CD8-positive, alpha-beta memory T cell (primary cell): ENCODE measurements at regions of chr1 and their contacts with region 1.

Region 1: DNA sequence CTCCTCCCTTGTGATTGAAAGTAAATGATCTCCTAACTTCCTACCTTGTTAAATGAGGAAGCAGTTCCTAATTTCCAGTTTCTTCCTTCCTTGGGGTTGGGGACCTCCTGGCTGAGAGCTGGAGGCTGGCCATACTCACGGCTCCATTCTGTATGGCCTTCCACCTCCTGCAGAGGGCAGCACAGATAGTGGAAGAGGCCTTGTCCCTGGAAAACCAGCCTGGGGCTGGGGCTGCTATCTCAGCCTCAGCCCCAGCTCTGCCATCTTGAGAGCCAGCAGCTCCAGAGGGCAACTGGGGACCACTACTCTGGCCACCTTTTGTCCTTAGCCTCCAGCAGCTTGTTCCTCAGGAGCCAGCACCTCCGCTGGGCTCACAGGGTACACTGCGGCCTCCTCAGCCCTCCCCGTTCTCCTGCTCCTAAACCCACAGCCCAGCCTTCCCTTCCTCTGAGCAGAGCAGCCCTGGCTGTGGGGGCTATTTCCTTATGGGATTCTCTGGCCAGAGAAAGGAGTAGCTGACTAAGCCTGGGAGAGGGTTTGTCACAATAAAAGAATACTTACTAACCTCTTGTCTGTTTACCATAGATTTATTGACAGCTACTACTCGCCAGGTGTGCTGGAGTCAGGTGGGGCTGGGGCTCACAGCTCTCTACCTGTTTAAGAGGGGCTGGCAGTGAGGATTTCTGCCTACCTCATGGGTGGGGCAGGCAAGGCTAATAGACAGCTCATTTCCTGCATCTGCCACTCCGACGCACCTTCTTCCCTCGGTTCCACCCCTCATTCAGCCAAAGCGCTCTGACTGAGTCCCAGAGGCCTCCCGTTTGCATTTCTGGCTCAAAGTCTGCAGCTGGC is 6.3 kb downstream of the TMEM234 start:
- DNase-seq: peak; percentile 32 to 66 (median 38)
- H3K4me3 ChIP-seq: no peak overlapping the region
- H3K4me3 Mint-ChIP-seq: peak overlapping the region in 1 of 7 donors; percentile 18
- H3K27ac ChIP-seq: no peak overlapping the region
- H3K27ac Mint-ChIP-seq: peak overlapping the region in 7 of 8 donors; percentile 12 to 72 (median 33)
- H3K4me1 ChIP-seq: peaks cover 14% of the 10 kb centered on the region
- H3K4me1 Mint-ChIP-seq: peaks cover 6 to 20% (median 20%) of the 10 kb centered on the region in 3 donors
- H3K27me3 ChIP-seq: no peaks in the 10 kb centered on the region
- H3K27me3 Mint-ChIP-seq: no peaks in the 10 kb centered on the region

Region 2: DNA sequence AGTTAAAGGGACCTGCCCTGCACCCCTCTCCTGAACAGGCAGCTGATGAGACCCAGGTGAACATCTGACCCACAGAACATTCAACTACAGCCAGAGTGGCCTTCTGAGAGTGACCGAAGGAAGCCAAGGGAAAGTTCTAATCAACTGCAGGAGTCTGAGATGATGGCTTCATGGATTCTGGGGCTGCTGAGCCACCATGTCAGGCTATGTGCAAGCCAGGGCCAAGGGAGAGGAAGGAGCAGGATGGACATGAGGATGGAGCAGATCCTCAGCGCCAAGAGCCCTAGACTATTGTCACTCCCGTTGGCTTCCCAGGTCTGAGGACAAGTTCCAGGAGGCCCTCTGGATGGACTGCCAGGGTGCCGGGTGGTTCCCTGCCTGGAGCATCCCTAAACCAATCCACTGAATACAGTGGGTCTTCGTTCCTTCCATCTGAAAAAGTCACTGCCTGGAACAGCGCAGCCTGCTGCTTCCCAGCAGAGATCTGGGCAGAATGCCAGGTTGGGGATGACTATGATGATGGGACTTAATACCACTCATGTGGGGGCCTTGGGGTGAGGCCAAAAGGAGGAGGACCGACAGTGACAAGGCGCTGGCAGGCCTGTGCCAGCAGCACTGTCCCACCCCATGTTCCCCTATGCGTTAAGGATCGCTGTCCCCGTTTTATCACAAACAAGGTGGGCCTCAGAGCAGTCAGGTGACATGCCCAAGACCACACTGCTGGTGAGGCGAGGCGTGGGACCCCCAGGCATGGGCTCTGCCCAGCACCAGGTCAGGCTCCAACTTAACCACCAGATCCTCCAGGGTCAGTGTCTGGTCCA is 419.8 kb before region 1 on chr1:
- CTCF ChIA-PET with region 1: no interaction called
- POLR2A ChIA-PET with region 1: no interaction called
- DNase-seq: peak in 1 of 5 donors; percentile 7
- H3K4me3 ChIP-seq: no peak overlapping the region
- H3K4me3 Mint-ChIP-seq: no peak overlapping the region
- H3K27ac ChIP-seq: no peak overlapping the region
- H3K27ac Mint-ChIP-seq: peak overlapping the region in 1 of 8 donors; percentile 47
- H3K4me1 ChIP-seq: no peaks in the 10 kb centered on the region
- H3K4me1 Mint-ChIP-seq: no peaks in the 10 kb centered on the region
- H3K27me3 ChIP-seq: peaks cover 5% of the 10 kb centered on the region
- H3K27me3 Mint-ChIP-seq: peaks cover 2 to 15% of the 10 kb centered on the region in 2 donors

Region 3: DNA sequence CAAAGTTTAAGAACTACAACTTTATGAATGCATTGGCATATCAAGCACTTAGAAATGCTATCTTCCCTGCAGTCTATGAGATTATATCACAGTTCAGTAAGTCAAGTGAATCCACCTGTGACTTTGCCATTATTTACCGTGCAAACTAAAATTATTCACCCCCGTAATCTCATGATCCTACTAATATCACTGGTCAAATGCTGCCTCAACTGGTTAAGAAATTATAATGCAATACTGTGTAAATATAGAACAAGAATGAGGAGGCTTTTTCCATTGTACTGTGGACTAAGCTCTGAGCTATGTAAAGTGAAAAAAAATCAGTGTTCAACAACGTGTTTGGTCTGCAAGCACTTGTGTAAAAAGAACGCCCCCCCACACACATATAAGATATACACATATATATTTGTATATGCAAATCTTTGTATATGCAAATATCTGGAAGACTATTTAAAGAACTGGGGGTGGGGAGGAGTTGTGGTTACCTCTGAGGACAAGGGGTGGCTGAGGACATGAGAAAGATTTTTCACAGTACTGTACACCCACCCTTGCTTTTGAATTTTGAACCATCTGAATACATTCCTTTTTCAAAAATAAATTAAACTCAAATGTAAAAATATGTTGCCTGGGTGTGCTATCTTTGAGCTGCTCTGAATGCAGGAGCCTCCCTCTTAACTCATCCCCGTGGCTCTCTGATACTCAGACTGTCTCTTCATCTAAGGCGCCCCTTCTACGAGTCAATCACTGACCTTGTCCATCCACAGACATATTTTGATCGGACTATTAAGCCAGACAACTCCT is 334.8 kb before region 1 on chr1:
- CTCF ChIA-PET with region 1: no interaction called
- POLR2A ChIA-PET with region 1: no interaction called
- DNase-seq: no peak
- H3K4me3 ChIP-seq: no peak overlapping the region
- H3K4me3 Mint-ChIP-seq: no peak overlapping the region
- H3K27ac ChIP-seq: no peak overlapping the region
- H3K27ac Mint-ChIP-seq: no peak overlapping the region
- H3K4me1 ChIP-seq: peaks cover 6% of the 10 kb centered on the region
- H3K4me1 Mint-ChIP-seq: peaks cover 13 to 22% (median 14%) of the 10 kb centered on the region in 3 donors
- H3K27me3 ChIP-seq: no peaks in the 10 kb centered on the region
- H3K27me3 Mint-ChIP-seq: peaks cover 0 to 1% of the 10 kb centered on the region in 2 donors

Region 4: GRCh38 chr1:32179443-32180185 is 36.2 kb before region 1 on chr1 and contains the start of gene TXLNA:
- CTCF ChIA-PET with region 1: no interaction called
- POLR2A ChIA-PET with region 1: no interaction called
- DNase-seq: peak; percentile 83 to 91 (median 87)
- H3K4me3 ChIP-seq: peak within 1 kb of the TSS; percentile 74
- H3K4me3 Mint-ChIP-seq: peak within 1 kb of the TSS; percentile 86 to 99 (median 91)
- H3K27ac ChIP-seq: peak within 1 kb of the TSS; percentile 88
- H3K27ac Mint-ChIP-seq: peak within 1 kb of the TSS; percentile 91 to 98 (median 94)
- H3K4me1 ChIP-seq: peaks cover 28% of the 10 kb centered on the region
- H3K4me1 Mint-ChIP-seq: peaks cover 35 to 51% (median 45%) of the 10 kb centered on the region in 3 donors
- H3K27me3 ChIP-seq: no peaks in the 10 kb centered on the region
- H3K27me3 Mint-ChIP-seq: no peaks in the 10 kb centered on the region
- total RNA-seq, gene TXLNA: 99.0 to 99.9 TPM

Region 5: DNA sequence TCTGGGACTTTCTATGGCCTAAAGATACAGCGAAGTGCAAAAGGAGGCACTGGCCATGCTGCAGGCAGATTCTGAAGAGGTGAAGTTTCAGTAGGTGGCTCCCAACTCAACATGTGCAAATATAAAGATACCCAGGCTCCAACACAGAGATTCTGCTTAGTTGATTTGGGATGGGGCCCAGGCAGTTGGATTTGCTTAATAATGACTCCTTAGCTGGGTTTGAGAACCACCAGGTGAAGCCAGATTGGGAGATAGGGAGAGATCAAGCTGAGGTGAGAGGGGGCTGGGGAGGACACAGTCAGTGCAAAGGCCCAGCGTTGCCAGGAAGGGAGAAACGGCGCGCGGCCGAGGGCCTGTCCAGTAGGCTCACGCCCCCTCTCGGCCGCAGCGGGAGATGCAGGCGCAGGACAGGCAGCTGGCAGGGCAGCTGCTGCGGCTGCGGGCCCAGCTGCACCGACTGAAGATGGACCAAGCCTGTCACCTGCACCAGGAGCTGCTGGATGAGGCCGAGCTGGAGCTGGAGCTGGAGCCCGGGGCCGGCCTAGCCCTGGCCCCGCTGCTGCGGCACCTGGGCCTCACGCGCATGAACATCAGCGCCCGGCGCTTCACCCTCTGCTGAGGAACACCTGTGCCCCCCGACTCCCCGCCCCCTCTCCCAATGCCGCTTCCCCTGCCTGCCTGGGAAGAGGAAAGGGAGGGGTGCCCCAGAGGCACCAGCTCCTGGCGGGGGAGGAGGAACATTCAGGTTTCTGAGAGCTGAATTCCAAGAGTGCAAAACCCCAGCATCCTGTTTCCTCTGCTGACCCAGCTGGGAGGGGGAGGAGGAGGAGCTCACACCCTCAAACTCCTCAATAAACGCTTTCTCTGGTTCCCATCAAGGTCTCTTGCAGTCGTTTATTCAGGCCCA is 32.4 kb after region 1 on chr1:
- CTCF ChIA-PET with region 1: interaction called, 40 read pairs
- POLR2A ChIA-PET with region 1: interaction called, 3 read pairs
- DNase-seq: peak; percentile 65 to 84 (median 68)
- H3K4me3 ChIP-seq: peak overlapping the region; percentile 60
- H3K4me3 Mint-ChIP-seq: peak overlapping the region; percentile 62 to 99 (median 85)
- H3K27ac ChIP-seq: no peak overlapping the region
- H3K27ac Mint-ChIP-seq: peak overlapping the region; percentile 72 to 100 (median 98)
- H3K4me1 ChIP-seq: peaks cover 48% of the 10 kb centered on the region
- H3K4me1 Mint-ChIP-seq: peaks cover 36 to 48% (median 40%) of the 10 kb centered on the region in 3 donors
- H3K27me3 ChIP-seq: no peaks in the 10 kb centered on the region
- H3K27me3 Mint-ChIP-seq: peaks cover 0 to 4% of the 10 kb centered on the region in 2 donors

Region 6: DNA sequence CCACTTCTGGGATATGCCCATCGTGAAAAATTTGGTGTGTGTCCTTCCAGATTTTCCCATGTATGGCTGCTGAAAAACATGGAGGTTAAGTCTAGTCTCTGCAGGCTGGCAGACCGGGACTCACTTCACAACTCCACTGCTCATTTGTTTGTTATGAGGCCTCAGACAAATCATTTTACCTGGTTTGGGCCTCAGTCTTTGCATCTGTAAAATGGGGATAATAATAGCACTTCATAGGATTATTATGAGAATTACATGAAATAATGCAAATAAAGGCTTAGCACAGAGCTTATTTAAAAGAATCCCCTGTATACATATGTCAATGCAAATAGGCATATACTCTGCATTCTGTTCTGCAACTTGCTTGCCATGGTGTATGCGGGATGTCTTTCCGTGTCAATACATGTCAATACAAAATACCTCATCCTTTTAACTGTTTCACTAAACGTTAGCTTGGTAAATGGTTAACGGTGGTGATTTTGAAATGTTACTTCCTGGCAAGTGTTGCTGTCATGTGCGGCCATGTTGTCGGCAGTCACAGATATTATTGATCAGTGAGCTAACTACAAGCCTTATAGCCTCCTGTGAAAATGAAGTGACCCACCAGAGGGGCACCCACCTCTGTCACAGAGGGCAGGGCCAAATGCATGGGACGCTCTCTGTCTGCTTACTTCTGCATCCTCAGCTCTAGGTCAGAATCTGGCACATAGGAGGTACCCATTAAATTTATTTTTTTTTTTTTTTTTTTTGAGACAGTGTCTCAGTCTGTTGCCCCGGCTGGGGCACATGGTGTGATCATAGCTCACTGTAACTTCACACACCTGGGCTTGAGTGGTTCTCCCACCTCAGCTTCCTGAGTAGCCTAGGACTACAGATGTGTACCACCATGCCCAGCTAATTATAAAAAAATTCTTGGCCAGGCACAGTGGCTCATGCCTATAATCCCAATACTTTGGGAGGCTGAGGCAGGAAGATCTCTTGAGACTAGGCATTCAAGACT is 39.5 kb after region 1 on chr1:
- CTCF ChIA-PET with region 1: interaction called, 40 read pairs
- POLR2A ChIA-PET with region 1: interaction called, 5 read pairs
- DNase-seq: peak in 1 of 5 donors; percentile 56
- H3K4me3 ChIP-seq: peak overlapping the region; percentile 60
- H3K4me3 Mint-ChIP-seq: peak overlapping the region; percentile 88 to 100 (median 96)
- H3K27ac ChIP-seq: no peak overlapping the region
- H3K27ac Mint-ChIP-seq: peak overlapping the region; percentile 76 to 100 (median 92)
- H3K4me1 ChIP-seq: peaks cover 47% of the 10 kb centered on the region
- H3K4me1 Mint-ChIP-seq: peaks cover 51 to 65% (median 56%) of the 10 kb centered on the region in 3 donors
- H3K27me3 ChIP-seq: no peaks in the 10 kb centered on the region
- H3K27me3 Mint-ChIP-seq: peaks cover 0 to 2% of the 10 kb centered on the region in 2 donors

Region 7: GRCh38 chr1:32291708-32292492 is 76.0 kb after region 1 on chr1 and contains the start of gene HDAC1:
- CTCF ChIA-PET with region 1: interaction called, 15 read pairs
- POLR2A ChIA-PET with region 1: interaction called, 4 read pairs
- DNase-seq: peak; percentile 95 to 98 (median 97)
- H3K4me3 ChIP-seq: peak within 1 kb of the TSS; percentile 76
- H3K4me3 Mint-ChIP-seq: peak within 1 kb of the TSS; percentile 96 to 100 (median 99)
- H3K27ac ChIP-seq: peak within 1 kb of the TSS; percentile 93
- H3K27ac Mint-ChIP-seq: peak within 1 kb of the TSS; percentile 95 to 99 (median 98)
- H3K4me1 ChIP-seq: peaks cover 59% of the 10 kb centered on the region
- H3K4me1 Mint-ChIP-seq: peaks cover 41 to 59% (median 55%) of the 10 kb centered on the region in 3 donors
- H3K27me3 ChIP-seq: no peaks in the 10 kb centered on the region
- H3K27me3 Mint-ChIP-seq: no peaks in the 10 kb centered on the region
- total RNA-seq, gene HDAC1: 164 to 172 TPM

Region 8: GRCh38 chr1:32372149-32372756 is 156.4 kb after region 1 on chr1:
- CTCF ChIA-PET with region 1: interaction called, 24 read pairs
- POLR2A ChIA-PET with region 1: interaction called, 10 read pairs
- DNase-seq: peak; percentile 42 to 82 (median 69)
- H3K4me3 ChIP-seq: no peak overlapping the region
- H3K4me3 Mint-ChIP-seq: peak overlapping the region in 1 of 7 donors; percentile 37
- H3K27ac ChIP-seq: no peak overlapping the region
- H3K27ac Mint-ChIP-seq: peak overlapping the region in 7 of 8 donors; percentile 5 to 77 (median 73)
- H3K4me1 ChIP-seq: peaks cover 13% of the 10 kb centered on the region
- H3K4me1 Mint-ChIP-seq: peaks cover 16 to 19% (median 18%) of the 10 kb centered on the region in 3 donors
- H3K27me3 ChIP-seq: no peaks in the 10 kb centered on the region
- H3K27me3 Mint-ChIP-seq: no peaks in the 10 kb centered on the region

Region 9: GRCh38 chr1:32394141-32394889 is 178.5 kb after region 1 on chr1 and contains the start of gene BSDC1:
- CTCF ChIA-PET with region 1: interaction called, 18 read pairs
- POLR2A ChIA-PET with region 1: no interaction called
- DNase-seq: peak; percentile 96 to 98 (median 97)
- H3K4me3 ChIP-seq: peak within 1 kb of the TSS; percentile 99
- H3K4me3 Mint-ChIP-seq: peak within 1 kb of the TSS; percentile 92 to 100 (median 98)
- H3K27ac ChIP-seq: peak within 1 kb of the TSS; percentile 99
- H3K27ac Mint-ChIP-seq: peak within 1 kb of the TSS; percentile 84 to 100 (median 100)
- H3K4me1 ChIP-seq: peaks cover 39% of the 10 kb centered on the region
- H3K4me1 Mint-ChIP-seq: peaks cover 12 to 26% (median 14%) of the 10 kb centered on the region in 3 donors
- H3K27me3 ChIP-seq: no peaks in the 10 kb centered on the region
- H3K27me3 Mint-ChIP-seq: peaks cover 0 to 2% of the 10 kb centered on the region in 2 donors
- total RNA-seq, gene BSDC1: 35.1 to 37.6 TPM

Region 10: GRCh38 chr1:32400876-32401631 is 185.2 kb after region 1 on chr1:
- CTCF ChIA-PET with region 1: interaction called, 13 read pairs
- POLR2A ChIA-PET with region 1: no interaction called
- DNase-seq: peak; percentile 21 to 66 (median 39)
- H3K4me3 ChIP-seq: no peak overlapping the region
- H3K4me3 Mint-ChIP-seq: peak overlapping the region in 2 of 7 donors; percentile 32 to 83
- H3K27ac ChIP-seq: no peak overlapping the region
- H3K27ac Mint-ChIP-seq: no peak overlapping the region
- H3K4me1 ChIP-seq: no peaks in the 10 kb centered on the region
- H3K4me1 Mint-ChIP-seq: no peaks in the 10 kb centered on the region
- H3K27me3 ChIP-seq: no peaks in the 10 kb centered on the region
- H3K27me3 Mint-ChIP-seq: no peaks in the 10 kb centered on the region